ENCODE measurements at regions of chr5 and their contacts with region 1.

Region 1: DNA sequence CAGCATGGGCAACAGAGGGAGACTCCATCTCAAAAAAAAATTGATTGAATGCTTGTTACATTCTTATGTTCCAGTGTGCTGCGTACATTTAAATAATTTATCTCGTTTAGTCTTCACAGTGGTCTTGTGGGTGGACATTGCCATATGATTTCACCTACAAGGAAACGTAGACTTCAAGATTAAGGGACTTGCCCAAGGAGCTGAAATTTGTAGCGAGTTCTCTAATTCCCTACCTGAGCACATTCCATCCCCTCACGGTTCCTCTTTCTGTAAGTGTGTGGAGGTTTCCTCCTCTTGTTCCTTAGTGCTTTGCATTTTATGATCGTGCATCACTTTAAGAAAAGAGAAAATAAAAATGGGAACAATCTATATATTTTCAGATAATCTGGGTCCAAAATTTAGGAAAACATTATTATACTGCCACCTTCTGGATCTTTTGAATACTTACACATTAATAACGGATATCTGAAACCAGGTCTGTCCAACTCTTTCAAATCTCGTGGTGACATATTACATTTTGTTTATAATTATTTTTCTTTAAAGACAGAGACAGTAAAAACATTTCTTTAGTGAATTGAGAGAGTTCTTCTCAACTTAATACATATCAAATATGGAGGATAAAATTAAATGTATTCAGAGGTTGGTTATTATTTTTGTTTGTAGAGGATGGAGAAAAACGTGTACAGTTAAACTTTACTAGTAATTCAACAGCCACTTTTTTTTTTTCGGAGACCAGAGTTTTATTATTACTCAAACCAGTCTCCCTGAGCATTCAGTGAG is 29.9 kb upstream of the C7 start:
- DNase-seq: no peak
- H3K4me3 ChIP-seq: no peak overlapping the region
- H3K27ac ChIP-seq: no peak overlapping the region
- H3K4me1 ChIP-seq: no peaks in the 10 kb centered on the region
- H3K27me3 ChIP-seq: no peaks in the 10 kb centered on the region
- CTCF ChIP-seq: peak; percentile 8 to 51 (median 26)
- EP300 ChIP-seq: no peak
- POLR2A ChIP-seq: no peak

Region 2: DNA sequence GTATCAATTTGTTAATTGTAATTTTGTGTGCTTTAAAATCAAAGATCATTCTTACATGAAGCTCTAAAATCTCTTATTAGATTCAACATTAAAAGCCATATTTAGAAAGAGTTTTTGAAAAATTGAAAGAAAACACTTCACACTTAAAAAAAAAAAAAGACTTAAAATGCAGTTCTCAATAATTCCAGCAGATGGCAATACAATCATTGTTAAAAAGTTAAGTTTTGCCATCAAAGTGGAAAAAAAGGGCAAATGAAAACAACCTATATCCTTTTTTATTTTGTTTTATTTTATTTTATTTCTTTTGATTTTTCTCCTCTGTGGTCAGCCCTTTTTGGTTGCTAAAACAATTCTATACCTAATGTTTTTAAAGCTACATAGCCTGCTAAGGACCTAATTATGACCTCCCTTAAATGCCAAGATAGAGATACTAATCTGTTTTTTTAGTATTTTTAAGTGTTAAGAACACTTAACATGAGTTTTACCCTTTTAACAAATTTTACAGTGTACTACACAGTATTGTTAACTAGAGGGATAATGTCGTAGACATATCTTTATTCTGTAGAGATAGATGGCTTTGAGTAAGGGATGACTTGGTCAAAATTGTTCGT is 1300.4 kb before region 1 on chr5:
- intact Hi-C with region 1: loop called (anchors 5 kb)
- DNase-seq: no peak
- H3K4me3 ChIP-seq: no peak overlapping the region
- H3K27ac ChIP-seq: no peak overlapping the region
- H3K4me1 ChIP-seq: no peaks in the 10 kb centered on the region
- H3K27me3 ChIP-seq: no peaks in the 10 kb centered on the region
- CTCF ChIP-seq: peak in 3 of 4 experiments; percentile 28 to 71 (median 43)
- EP300 ChIP-seq: no peak
- POLR2A ChIP-seq: no peak